ENCODE measurements at regions of chr20 and their contacts with region 1.

Region 1: DNA sequence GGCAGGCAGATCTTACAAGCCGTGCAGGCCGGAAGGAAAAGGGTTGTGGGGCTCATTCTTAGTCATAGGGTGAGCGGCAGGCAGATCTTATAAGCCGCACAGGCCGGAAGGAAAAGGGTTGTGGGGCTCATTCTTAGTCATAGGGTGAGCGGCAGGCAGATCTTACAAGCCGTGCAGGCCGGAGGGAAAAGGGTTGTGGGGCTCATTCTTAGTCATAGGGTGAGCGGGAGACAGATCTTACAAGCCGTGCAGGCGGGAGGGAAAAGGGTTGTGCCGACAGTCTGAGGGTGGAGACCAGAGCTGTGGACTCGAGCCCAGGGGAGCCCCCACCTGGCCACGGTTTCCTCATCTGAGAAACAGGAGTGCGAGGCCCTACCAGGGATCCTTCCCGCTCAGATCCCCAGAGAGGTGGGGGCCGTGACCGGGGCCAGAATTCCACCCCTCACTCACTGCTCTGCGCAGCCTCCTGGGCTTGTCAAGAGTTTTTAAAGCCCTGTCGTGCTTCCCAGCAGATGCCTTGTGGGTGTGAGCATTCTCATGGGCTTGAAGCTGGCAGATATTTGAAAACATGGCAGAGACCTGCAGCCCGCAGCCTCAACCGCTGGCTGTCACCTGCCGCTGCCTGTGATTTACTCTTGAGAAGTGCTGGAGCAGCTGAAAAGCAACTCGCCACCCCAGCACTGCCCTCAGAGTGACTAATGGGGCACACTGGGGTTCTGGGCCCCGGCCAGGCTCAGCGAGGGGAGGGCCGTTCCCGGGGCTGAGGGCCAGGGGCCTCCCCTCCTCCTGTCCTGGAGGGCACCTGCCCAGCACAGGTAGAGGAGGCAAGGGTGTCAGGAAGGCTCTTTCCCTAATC is 31.9 kb downstream of the NTSR1 start:
- DNase-seq: peak; percentile 64 to 94 (median 78)
- ATAC-seq: peak; percentile 77
- H3K4me3 ChIP-seq: peak overlapping the region; percentile 55
- H3K4me3 Mint-ChIP-seq: peak overlapping the region; percentile 81
- H3K27ac ChIP-seq: peak overlapping the region; percentile 86 to 88
- H3K27ac Mint-ChIP-seq: peak overlapping the region; percentile 86
- H3K4me1 ChIP-seq: peaks cover 68% of the 10 kb centered on the region
- H3K4me1 Mint-ChIP-seq: peaks cover 52% of the 10 kb centered on the region
- H3K27me3 ChIP-seq: no peaks in the 10 kb centered on the region
- H3K27me3 Mint-ChIP-seq: no peaks in the 10 kb centered on the region
- CTCF ChIP-seq: no peak

Region 2: DNA sequence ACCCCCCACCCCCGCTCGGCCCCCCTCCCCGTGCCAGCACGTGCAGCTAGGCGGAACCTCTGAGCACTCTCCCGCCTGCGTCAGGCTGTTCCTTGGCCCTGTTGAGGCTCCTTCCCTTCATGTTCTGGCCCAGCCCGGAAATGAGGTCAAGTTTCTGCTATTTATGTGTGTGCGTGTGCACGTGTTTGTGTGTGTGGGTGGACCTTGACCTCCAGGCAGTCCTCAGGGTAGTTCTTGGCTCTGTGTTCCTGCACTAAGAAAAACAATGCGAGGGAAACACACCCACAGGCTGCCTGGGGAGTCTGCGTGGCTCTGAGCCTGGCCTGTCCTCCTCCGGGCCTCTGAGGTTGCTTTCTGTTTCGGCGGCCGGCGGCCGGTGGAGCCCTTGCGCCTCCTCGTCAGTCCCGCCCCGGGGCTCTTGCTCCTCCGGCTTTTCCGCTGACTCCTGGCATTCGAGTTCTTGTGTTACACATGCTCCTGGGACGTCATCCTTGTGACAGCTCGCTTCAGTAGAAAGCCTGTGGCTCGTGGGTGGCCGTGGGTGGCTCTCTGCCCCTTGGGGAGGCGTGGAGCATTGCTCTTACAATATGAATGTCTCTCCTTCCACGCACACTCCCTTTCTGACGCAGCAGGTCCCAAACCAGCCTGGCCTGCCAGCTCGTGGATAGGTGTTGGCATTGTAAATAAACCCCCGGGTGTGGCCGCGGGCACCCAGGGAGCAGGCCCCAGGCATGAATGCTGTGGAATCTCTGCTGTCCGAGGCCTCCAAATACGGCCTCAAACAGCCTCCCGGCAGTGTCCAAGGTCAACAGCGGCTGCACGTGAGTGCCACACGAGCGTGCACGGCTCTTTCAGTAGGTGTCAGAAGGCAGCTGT is 88.2 kb before region 1 on chr20:
- CTCF ChIA-PET with region 1: no interaction called
- POLR2A ChIA-PET with region 1: interaction called, 19 read pairs
- intact Hi-C with region 1: loop called in 1 of 2 experiments (anchors 2 kb)
- DNase-seq: peak; percentile 48 to 90 (median 64)
- ATAC-seq: peak; percentile 64
- H3K4me3 ChIP-seq: peak overlapping the region; percentile 56
- H3K4me3 Mint-ChIP-seq: peak overlapping the region; percentile 93
- H3K27ac ChIP-seq: peak overlapping the region; percentile 70 to 89
- H3K27ac Mint-ChIP-seq: peak overlapping the region; percentile 91
- H3K4me1 ChIP-seq: peaks cover 38% of the 10 kb centered on the region
- H3K4me1 Mint-ChIP-seq: peaks cover 30% of the 10 kb centered on the region
- H3K27me3 ChIP-seq: no peaks in the 10 kb centered on the region
- H3K27me3 Mint-ChIP-seq: no peaks in the 10 kb centered on the region
- CTCF ChIP-seq: no peak

Region 3: DNA sequence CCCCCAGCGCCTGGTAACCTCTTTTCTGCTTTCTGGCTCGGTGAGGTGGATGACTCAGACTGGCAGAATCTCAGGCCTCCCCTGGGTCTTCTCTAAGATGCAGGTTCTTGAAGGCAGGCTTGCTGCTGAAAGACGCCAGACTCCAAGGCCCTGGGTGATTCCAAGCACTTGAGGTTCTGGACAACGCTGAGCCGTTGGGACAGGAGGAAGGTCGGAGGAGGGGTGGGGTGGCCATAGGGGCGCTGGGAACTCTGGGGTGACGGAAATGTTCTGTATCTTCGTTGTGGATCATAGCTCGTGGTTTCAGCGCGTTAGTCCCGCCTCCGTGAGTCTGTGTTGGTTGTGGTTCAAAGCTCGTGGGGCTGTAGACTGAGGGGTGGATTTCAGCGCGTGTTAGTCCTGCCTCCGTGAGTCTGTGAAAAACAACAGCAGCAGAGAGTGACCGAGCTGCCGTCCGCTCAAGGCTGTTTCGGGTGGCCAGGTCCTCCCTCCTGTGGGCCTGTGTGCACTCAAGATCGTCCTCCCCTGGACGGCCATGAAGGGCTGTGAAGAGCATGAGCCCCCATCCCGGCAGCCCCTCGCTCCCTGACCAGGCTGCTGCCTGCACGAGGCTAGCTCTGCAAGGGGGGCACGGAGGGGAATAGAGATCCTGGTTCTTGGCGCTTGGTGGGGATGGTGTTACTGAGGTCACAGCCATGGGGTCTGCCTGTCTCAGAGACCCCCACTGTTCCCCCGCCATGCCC is 24.1 kb before region 1 on chr20:
- CTCF ChIA-PET with region 1: interaction called, 6 read pairs
- POLR2A ChIA-PET with region 1: interaction called, 13 read pairs
- intact Hi-C with region 1: loop called (anchors 1 to 2 kb)
- DNase-seq: peak; percentile 22 to 81 (median 51)
- ATAC-seq: peak; percentile 97
- H3K4me3 ChIP-seq: peak overlapping the region; percentile 19
- H3K4me3 Mint-ChIP-seq: peak overlapping the region; percentile 62
- H3K27ac ChIP-seq: peak overlapping the region; percentile 10 to 48
- H3K27ac Mint-ChIP-seq: peak overlapping the region; percentile 89
- H3K4me1 ChIP-seq: peaks cover 33% of the 10 kb centered on the region
- H3K4me1 Mint-ChIP-seq: peaks cover 35% of the 10 kb centered on the region
- H3K27me3 ChIP-seq: no peaks in the 10 kb centered on the region
- H3K27me3 Mint-ChIP-seq: no peaks in the 10 kb centered on the region
- CTCF ChIP-seq: no peak

Region 4: DNA sequence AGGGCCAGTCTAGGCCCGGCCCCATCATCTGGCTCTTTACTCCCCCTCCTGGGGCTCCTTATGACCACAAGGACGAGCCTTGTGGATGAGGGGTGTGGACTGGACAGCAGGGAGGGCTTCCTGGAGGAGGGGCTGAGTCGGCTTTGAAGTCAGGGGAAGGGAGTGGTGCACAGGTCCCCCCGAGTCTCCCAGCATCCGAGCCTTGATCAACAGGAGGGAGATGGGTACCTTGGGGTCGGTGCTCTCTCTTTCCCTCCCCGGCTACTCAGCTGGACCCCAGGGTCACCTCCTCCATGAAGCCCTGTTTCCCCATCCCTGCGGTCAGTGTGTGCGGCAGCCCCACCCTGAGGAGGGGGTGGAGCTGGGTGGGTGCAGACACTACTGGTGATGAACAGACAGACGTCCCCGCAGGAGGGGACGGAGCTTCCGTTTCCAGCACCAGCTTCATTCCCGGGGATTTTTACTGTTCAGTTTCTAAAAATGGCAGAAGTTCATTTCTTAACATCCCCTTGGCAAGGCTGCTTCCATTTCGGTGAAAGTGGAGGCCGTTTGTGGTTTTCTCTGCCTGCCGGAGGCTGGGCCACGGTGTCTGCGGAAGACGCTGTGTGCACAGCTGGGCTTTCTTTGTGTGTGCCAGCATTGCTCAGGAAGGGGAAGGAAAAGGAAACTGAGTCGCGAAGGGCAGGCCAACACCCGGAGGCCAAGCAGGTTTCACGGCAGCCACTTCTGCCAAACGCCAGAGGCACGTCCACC is 12.3 kb before region 1 on chr20:
- CTCF ChIA-PET with region 1: interaction called, 5 read pairs
- POLR2A ChIA-PET with region 1: interaction called, 17 read pairs
- intact Hi-C with region 1: no loop called
- DNase-seq: peak in 4 of 14 experiments; percentile 31 to 51 (median 42)
- ATAC-seq: peak; percentile 58
- H3K4me3 ChIP-seq: peak overlapping the region; percentile 20
- H3K4me3 Mint-ChIP-seq: peak overlapping the region; percentile 82
- H3K27ac ChIP-seq: no peak overlapping the region
- H3K27ac Mint-ChIP-seq: peak overlapping the region; percentile 84
- H3K4me1 ChIP-seq: peaks cover 27% of the 10 kb centered on the region
- H3K4me1 Mint-ChIP-seq: peaks cover 25% of the 10 kb centered on the region
- H3K27me3 ChIP-seq: no peaks in the 10 kb centered on the region
- H3K27me3 Mint-ChIP-seq: no peaks in the 10 kb centered on the region
- CTCF ChIP-seq: no peak

Region 5: GRCh38 chr20:62776692-62777527 is 36.4 kb after region 1 on chr20:
- CTCF ChIA-PET with region 1: no interaction called
- POLR2A ChIA-PET with region 1: interaction called, 5 read pairs
- intact Hi-C with region 1: loop called (anchors 2 kb)
- DNase-seq: peak; percentile 29 to 89 (median 66)
- ATAC-seq: peak; percentile 82
- H3K4me3 ChIP-seq: peak overlapping the region; percentile 23
- H3K4me3 Mint-ChIP-seq: peak overlapping the region; percentile 74
- H3K27ac ChIP-seq: peak overlapping the region; percentile 77 to 89
- H3K27ac Mint-ChIP-seq: peak overlapping the region; percentile 92
- H3K4me1 ChIP-seq: peaks cover 59% of the 10 kb centered on the region
- H3K4me1 Mint-ChIP-seq: peaks cover 58% of the 10 kb centered on the region
- H3K27me3 ChIP-seq: no peaks in the 10 kb centered on the region
- H3K27me3 Mint-ChIP-seq: no peaks in the 10 kb centered on the region
- CTCF ChIP-seq: no peak

Region 6: GRCh38 chr20:62900052-62900691 is 159.7 kb after region 1 on chr20:
- CTCF ChIA-PET with region 1: no interaction called
- POLR2A ChIA-PET with region 1: no interaction called
- intact Hi-C with region 1: no loop called
- DNase-seq: peak; percentile 63 to 89 (median 76)
- ATAC-seq: peak; percentile 89
- H3K4me3 ChIP-seq: no peak overlapping the region
- H3K4me3 Mint-ChIP-seq: peak overlapping the region; percentile 71
- H3K27ac ChIP-seq: peak overlapping the region; percentile 8 to 47
- H3K27ac Mint-ChIP-seq: peak overlapping the region; percentile 92
- H3K4me1 ChIP-seq: peaks cover 29% of the 10 kb centered on the region
- H3K4me1 Mint-ChIP-seq: peaks cover 40% of the 10 kb centered on the region
- H3K27me3 ChIP-seq: no peaks in the 10 kb centered on the region
- H3K27me3 Mint-ChIP-seq: no peaks in the 10 kb centered on the region
- CTCF ChIP-seq: peak; percentile 96

Measured in CD4-positive, alpha-beta T cell (primary cell).